ENCODE measurements at regions of chr3 and their contacts with region 1.

Region 1: DNA sequence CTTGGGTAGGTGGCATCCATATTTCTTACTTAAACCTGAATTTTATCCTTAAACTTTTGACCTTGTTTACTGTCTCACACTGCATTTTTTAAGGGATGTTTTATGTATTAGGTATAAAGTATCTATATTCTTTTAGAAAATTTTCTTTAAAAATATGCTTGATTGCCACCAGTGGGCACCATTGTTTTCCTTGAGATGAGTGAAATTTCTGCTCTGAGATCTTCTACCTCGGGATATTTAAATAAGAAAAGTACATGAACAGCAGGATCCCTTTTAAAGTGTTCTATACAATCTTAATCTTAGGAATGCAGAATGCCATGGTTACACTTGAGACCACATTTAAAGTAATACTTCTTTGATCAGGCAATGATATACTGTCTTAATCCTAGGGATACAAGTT is 108.7 kb downstream of the SLMAP start:
- DNase-seq: no peak
- H3K4me3 ChIP-seq: no peak overlapping the region
- H3K27ac ChIP-seq: peak overlapping the region in 1 of 2 donors; percentile 9
- H3K4me1 ChIP-seq: peaks cover 0 to 3% (median 0%) of the 10 kb centered on the region in 4 donors
- H3K27me3 ChIP-seq: no peaks in the 10 kb centered on the region
- CTCF ChIP-seq: peak; percentile 51 to 64

Region 2: DNA sequence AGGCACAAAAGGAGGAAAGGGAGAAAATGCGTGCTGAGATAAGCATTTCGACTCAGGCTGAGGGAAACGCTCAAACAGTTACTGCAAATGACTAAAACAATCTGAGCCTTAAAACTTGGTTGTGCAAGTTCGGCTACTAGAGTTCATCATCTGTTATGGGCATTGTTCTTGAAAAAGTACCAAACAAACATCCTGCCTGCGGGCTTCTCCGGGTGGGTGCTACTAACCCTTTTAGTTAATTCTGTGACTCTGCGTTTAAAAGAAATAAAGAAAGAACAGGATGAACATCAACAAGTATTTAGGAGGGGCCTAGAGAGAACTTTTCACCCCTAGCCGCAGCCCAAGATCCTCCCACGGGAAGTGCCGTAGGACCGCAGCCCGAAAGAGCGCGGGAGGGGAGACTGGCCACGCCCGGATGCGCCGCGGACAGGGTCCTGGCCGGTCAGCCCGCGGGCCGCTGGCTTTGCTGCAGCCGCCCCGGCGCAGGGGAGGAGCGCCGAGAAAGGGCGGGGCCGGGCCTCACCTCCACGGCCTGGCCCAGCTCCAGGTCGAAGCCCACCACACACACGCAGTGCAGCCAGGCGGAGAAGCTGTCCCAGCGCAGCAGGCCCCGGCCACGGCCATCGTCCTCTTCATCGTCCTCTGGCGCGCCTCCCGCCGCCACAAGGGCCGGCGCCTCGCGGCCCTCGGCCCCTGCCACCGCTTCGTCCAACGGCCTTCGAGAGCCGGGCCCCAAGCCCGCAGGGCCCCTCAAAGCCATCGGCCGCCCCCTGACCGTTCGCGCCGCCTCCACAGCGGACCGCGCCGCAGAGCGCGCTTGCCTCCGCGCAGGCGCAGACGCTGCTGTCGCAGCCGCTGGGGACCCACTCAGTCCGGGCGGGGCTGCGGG is 172.3 kb before region 1 on chr3 and contains the start of gene DENND6A:
- intact Hi-C with region 1: no loop called
- DNase-seq: peak; percentile 86 to 98
- H3K4me3 ChIP-seq: peak within 1 kb of the TSS; percentile 89 to 97
- H3K27ac ChIP-seq: peak within 1 kb of the TSS; percentile 96 to 98
- H3K4me1 ChIP-seq: peaks cover 0 to 44% (median 28%) of the 10 kb centered on the region in 4 donors
- H3K27me3 ChIP-seq: no peaks in the 10 kb centered on the region
- CTCF ChIP-seq: no peak

Region 3: DNA sequence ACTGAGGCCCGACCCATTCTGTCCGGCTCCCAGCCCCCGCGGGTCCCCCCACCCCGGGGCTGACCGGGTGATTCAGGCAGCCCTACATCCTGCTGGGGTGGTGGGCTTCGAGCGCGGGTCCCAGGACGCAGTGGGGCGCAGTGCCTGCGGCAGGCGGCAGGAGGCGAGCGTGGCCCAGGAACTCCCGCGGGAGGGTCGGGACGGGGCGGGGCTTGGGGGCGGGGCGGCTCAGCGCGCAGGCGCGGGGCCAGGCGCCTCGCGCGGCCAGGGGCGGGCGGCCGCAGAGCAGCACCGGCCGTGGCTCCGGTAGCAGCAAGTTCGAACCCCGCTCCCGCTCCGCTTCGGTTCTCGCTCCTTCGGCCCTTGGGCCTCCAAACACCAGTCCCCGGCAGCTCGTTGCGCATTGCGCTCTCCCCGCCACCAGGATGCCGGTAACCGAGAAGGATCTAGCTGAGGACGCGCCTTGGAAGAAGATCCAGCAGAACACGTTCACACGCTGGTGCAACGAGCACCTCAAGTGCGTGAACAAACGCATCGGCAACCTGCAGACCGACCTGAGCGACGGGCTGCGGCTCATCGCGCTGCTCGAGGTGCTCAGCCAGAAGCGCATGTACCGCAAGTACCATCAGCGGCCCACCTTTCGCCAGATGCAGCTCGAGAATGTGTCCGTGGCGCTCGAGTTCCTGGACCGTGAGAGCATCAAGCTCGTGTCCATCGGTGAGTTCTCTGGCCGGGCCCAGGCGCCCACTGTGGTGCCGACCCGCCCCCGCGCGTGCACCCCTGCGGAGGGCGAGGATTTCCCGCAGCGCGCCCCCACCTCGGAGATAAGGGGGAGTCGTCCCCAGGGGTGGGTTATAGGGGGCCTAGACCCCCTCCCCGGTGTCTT is 143.5 kb after region 1 on chr3 and contains the start of gene FLNB:
- intact Hi-C with region 1: loop called (anchors 5 kb)
- DNase-seq: peak; percentile 44 to 85
- H3K4me3 ChIP-seq: peak within 1 kb of the TSS; percentile 87
- H3K27ac ChIP-seq: peak within 1 kb of the TSS; percentile 74 to 78
- H3K4me1 ChIP-seq: peaks cover 2 to 43% (median 30%) of the 10 kb centered on the region in 4 donors
- H3K27me3 ChIP-seq: no peaks in the 10 kb centered on the region
- CTCF ChIP-seq: peak; percentile 70 to 79

Region 4: GRCh38 chr3:58167431-58168351 is 302.8 kb after region 1 on chr3:
- intact Hi-C with region 1: loop called (anchors 10 kb)
- DNase-seq: peak; percentile 55 to 84
- H3K4me3 ChIP-seq: no peak overlapping the region
- H3K27ac ChIP-seq: peak overlapping the region; percentile 31 to 32
- H3K4me1 ChIP-seq: peaks cover 0 to 45% (median 29%) of the 10 kb centered on the region in 4 donors
- H3K27me3 ChIP-seq: no peaks in the 10 kb centered on the region
- CTCF ChIP-seq: peak; percentile 77 to 95

Measured in tibial artery (tissue), 4 donors.